ENCODE measurements at regions of chr1 and their contacts with region 1.

Region 1: DNA sequence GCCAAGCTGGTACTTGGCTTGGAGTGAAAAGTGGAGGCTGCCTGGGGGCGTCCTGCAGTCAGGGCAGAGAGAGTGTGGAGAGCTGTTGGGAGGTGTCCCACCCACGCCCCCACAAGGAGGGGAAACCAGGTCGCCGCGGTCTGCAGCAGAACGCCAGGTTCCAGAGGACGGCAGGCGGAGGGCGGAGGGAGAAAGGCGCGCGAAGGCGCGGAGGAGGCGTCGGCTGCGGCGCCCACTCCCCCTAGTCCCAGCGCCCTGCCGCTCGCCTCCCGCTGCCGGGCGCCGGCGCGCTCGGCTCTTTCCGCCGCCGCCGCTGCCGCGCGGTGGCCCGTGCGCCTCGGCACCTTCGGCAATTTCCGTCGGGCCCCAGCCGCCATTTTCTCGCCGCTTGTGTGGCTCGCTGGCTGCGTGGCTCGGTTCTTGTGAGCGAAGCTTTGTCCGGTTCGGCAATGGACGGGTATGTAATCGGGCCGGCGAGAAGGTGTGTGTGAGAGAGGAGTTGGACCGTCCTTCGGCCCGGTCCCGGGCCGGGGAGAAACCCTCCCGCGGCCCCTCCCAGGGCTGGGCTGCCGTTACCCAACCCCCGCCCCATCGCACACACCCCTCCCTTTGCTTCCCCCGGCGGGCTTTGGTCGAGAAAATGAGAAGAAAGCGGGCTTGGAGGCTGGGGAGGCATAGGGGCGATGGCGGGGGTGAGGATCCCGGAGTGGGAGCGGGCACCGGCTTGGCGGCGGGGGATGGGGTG is at the start of gene PTBP2:
- DNase-seq: peak; percentile 84
- H3K4me3 ChIP-seq: peak within 1 kb of the TSS; percentile 52 to 99 (median 93)
- H3K27ac ChIP-seq: peak within 1 kb of the TSS; percentile 82
- H3K4me1 ChIP-seq: peaks cover 23% of the 10 kb centered on the region
- H3K27me3 ChIP-seq: no peaks in the 10 kb centered on the region
- CTCF ChIP-seq: no peak
- POLR2A ChIP-seq: no peak
- total RNA-seq, gene PTBP2: 21.3 and 27.0 TPM in 2 replicates

Region 2: GRCh38 chr1:95935719-95936118 is 785.9 kb before region 1 on chr1:
- CTCF ChIA-PET with region 1: no interaction called
- POLR2A ChIA-PET with region 1: no interaction called
- dilution Hi-C with region 1: no loop called
- intact Hi-C with region 1: loop called (anchors 10 kb)
- DNase-seq: no peak
- H3K4me3 ChIP-seq: no peak overlapping the region
- H3K27ac ChIP-seq: no peak overlapping the region
- H3K4me1 ChIP-seq: peaks cover 24% of the 10 kb centered on the region
- H3K27me3 ChIP-seq: peaks cover 0 to 4% of the 10 kb centered on the region in 2 experiments
- CTCF ChIP-seq: no peak
- POLR2A ChIP-seq: no peak

Region 3: GRCh38 chr1:96388421-96389310 is 332.9 kb before region 1 on chr1:
- CTCF ChIA-PET with region 1: no interaction called
- POLR2A ChIA-PET with region 1: no interaction called
- dilution Hi-C with region 1: no loop called
- intact Hi-C with region 1: loop called (anchors 2 kb)
- DNase-seq: peak; percentile 98
- H3K4me3 ChIP-seq: no peak overlapping the region
- H3K27ac ChIP-seq: peak overlapping the region; percentile 93
- H3K4me1 ChIP-seq: peaks cover 22% of the 10 kb centered on the region
- H3K27me3 ChIP-seq: no peaks in the 10 kb centered on the region
- CTCF ChIP-seq: no peak
- POLR2A ChIP-seq: peak; percentile 36